ENCODE measurements at regions of chr10 and their contacts with region 1.

Region 1: DNA sequence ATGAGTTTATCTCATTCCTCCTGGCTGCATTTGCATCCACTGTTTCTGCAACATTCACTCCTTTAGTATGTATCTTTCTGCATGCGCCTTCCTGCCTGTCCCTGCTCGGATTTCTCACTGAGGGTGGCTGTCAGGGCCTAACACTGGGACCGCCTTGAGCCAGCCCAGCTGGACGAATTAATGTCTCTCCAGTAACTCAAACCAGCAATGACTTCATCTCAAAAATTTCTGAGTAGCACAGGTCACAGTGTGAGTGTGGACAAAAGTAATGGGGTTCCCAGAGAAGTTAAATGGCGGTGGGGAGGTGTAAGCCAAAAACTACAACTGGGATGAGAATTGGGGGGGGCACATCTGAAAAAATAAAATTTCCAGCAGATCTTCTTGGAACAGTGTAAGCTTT is 444.0 kb upstream of the MGMT start:
- DNase-seq: peak; percentile 71 to 89 (median 75)
- ATAC-seq: peak; percentile 60 to 90 (median 84)
- H3K4me3 ChIP-seq: peak overlapping the region in 1 of 12 donors; percentile 29
- H3K27ac ChIP-seq: peak overlapping the region in 4 of 12 donors; percentile 4 to 67 (median 50)
- H3K4me1 ChIP-seq: peaks cover 0 to 31% (median 1%) of the 10 kb centered on the region in 12 donors
- H3K27me3 ChIP-seq: peaks cover 0 to 28% (median 0%) of the 10 kb centered on the region in 9 donors
- CTCF ChIP-seq: no peak
- POLR2A ChIP-seq: no peak

Region 2: GRCh38 chr10:128631801-128632241 is 391.3 kb before region 1 on chr10:
- intact Hi-C with region 1: loop called in 1 of 10 experiments (anchors 10 kb)
- DNase-seq: no peak
- ATAC-seq: no peak
- H3K4me3 ChIP-seq: no peak overlapping the region
- H3K27ac ChIP-seq: no peak overlapping the region
- H3K4me1 ChIP-seq: peaks cover 0 to 6% (median 0%) of the 10 kb centered on the region in 12 donors
- H3K27me3 ChIP-seq: peaks cover 0 to 9% (median 0%) of the 10 kb centered on the region in 9 donors
- CTCF ChIP-seq: peak; percentile 47 to 78 (median 65)
- POLR2A ChIP-seq: no peak

Region 3: DNA sequence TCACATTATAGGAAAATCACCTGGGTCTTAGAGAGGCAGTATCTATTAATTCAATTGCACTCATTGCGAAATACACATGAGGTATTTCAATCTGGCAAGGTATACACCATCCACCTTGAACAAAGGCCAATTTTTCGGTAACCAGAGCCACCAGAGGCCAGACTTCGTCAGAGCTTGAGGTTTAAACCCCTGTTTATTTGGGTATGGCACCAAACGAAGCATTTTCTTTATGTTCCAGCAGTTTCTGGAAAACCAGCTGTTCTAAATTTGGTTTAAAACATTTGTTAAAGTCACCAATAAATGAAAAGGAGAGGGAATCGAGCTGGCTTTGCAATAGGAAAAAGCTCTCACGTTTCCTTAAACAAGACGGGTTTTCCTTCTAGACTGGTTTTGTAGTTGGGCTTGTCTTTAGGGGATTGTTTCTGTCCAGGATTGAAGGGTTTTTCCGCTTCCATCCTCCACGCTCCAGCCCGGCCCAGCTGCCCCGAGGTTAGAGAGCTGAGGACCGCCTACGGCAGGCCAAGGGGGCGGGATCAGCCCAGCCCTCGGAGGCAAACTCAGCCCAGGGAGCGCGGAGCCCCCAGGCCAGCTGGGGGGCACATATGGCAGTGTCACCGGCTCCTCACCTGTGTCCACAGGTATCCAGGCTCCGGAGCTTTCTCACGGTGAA is 95.5 kb before region 1 on chr10:
- intact Hi-C with region 1: loop called in 1 of 10 experiments (anchors 5 kb)
- DNase-seq: peak; percentile 63 to 81 (median 73)
- ATAC-seq: peak; percentile 54 to 85 (median 78)
- H3K4me3 ChIP-seq: peak overlapping the region in 1 of 12 donors; percentile 16
- H3K27ac ChIP-seq: peak overlapping the region in 11 of 12 donors; percentile 23 to 74 (median 58)
- H3K4me1 ChIP-seq: peaks cover 0 to 36% (median 10%) of the 10 kb centered on the region in 12 donors
- H3K27me3 ChIP-seq: peaks cover 0 to 8% (median 0%) of the 10 kb centered on the region in 9 donors
- CTCF ChIP-seq: no peak
- POLR2A ChIP-seq: no peak

Region 4: DNA sequence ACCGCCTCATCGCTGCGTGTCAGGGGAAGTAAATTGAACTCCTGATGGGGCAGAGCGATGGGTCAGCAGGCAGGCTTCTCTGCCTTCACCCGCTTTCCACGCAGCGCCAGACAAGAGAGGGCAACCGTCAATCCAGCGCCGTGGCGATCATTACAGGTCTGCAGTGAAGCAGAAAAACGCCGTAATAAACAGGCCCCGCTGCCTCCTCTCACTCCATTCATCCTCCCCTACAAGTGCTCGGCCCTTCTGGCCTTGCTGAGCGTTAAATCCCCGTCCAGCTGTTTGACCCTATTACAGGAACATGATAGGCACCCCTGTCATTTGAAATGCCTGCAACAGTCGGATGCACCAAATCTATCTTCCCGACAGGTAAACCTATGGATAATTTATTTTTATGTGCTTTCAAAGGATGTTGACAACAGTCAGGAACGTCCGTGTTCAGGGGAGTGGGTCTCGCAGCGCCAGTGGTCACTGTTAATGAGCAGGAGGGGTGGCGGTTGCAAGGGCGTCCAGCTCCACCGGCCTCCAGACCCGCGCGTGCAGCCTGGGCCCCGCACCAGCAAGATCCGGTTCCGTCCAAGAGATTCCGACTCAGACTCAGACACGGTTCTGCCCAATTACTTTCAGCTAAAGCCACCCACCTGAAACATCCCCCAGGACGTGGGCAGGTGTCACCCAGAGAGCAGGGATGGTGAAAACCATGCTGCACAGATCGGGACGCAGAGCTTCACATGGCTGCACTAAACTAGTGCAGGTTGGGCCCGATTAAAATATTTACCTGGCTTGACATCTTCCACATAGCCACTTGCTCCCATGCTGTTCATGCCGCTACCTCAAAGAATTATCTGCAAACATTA is 64.0 kb before region 1 on chr10:
- intact Hi-C with region 1: no loop called
- DNase-seq: no peak
- ATAC-seq: no peak
- H3K4me3 ChIP-seq: no peak overlapping the region
- H3K27ac ChIP-seq: no peak overlapping the region
- H3K4me1 ChIP-seq: no peaks in the 10 kb centered on the region
- H3K27me3 ChIP-seq: peaks cover 0 to 6% (median 0%) of the 10 kb centered on the region in 9 donors
- CTCF ChIP-seq: no peak
- POLR2A ChIP-seq: no peak

Region 5: DNA sequence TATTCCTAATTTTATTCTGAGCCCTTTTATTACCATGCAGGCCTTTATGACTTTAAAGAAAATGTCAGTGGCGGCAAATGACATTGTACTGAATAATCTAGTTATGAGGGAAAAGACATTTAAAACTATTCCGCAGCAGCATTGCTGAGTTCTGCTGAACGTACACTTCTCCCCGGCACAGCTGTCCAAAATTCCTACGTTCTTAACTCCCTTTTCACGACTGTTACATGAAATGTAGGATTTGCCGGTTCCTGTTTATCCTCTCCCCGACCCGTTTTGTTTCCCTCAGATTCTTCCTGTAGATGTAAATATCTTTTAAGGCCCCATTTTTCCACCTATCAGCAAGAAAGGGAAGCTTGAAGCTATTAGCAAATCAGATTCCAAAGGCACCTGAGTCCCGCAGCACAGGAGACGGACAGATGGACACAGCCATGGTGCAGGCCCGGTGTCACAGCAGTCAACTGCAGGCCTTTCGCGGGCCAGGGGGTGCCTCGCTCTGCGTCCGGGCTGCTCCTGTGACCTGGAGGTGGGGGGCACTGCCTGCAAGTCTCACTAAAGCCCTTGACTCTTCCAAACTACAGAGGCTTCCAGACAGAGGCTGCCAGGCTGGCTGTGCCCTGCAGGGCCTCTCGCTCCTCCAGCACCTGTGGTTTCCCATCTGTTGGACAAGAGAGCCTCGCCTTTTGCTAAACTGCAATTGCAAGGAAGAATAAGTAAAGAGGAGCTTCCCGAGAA is 41.0 kb before region 1 on chr10:
- intact Hi-C with region 1: no loop called
- DNase-seq: no peak
- ATAC-seq: no peak
- H3K4me3 ChIP-seq: no peak overlapping the region
- H3K27ac ChIP-seq: no peak overlapping the region
- H3K4me1 ChIP-seq: no peaks in the 10 kb centered on the region
- H3K27me3 ChIP-seq: no peaks in the 10 kb centered on the region
- CTCF ChIP-seq: no peak
- POLR2A ChIP-seq: no peak

Measured in heart left ventricle (tissue), 16 donors.